A549 (cell line): ENCODE measurements at regions of chr10 and their contacts with region 1.

Region 1: GRCh38 chr10:88386821-88387773 is 196.0 kb downstream of the RNLS start:
- DNase-seq: peak; percentile 33 to 73
- ATAC-seq: peak; percentile 35 to 79; a peak in 5 of 6 replicates
- H3K4me3 ChIP-seq: 0 out of 3 replicates have a peak overlapping the region, but pooled peaks have one; percentile 2
- H3K27ac ChIP-seq: peak overlapping the region; percentile 77 to 82
- H3K4me1 ChIP-seq: peaks cover 29% of the 10 kb centered on the region
- CTCF ChIP-seq: no peak
- EP300 ChIP-seq: no peak
- POLR2A ChIP-seq: no peak
- RAD21 ChIP-seq: no peak

Region 2: GRCh38 chr10:87850742-87851205 is 536.3 kb before region 1 on chr10:
- CTCF ChIA-PET with region 1: interaction called, 39 read pairs
- POLR2A ChIA-PET with region 1: interaction called, 3 read pairs
- DNase-seq: peak; percentile 63 to 83
- ATAC-seq: peak; percentile 89 to 92
- H3K4me3 ChIP-seq: no peak overlapping the region
- H3K27ac ChIP-seq: peak overlapping the region in 1 of 2 experiments; percentile 58; a peak in 3 of 6 replicates
- H3K4me1 ChIP-seq: peaks cover 29% of the 10 kb centered on the region
- CTCF ChIP-seq: peak; percentile 64
- EP300 ChIP-seq: no peak
- POLR2A ChIP-seq: no peak
- RAD21 ChIP-seq: peak; percentile 82 to 87

Region 3: GRCh38 chr10:88114368-88114767 is 272.7 kb before region 1 on chr10:
- CTCF ChIA-PET with region 1: interaction called, 10 read pairs
- POLR2A ChIA-PET with region 1: interaction called, 9 read pairs
- DNase-seq: peak; percentile 62 to 66
- ATAC-seq: peak; percentile 83 to 93
- H3K4me3 ChIP-seq: no peak overlapping the region
- H3K27ac ChIP-seq: no peak overlapping the region
- H3K4me1 ChIP-seq: peaks cover 22% of the 10 kb centered on the region
- CTCF ChIP-seq: peak; percentile 56
- EP300 ChIP-seq: no peak
- POLR2A ChIP-seq: no peak
- RAD21 ChIP-seq: peak; percentile 67 to 71

Region 4: DNA sequence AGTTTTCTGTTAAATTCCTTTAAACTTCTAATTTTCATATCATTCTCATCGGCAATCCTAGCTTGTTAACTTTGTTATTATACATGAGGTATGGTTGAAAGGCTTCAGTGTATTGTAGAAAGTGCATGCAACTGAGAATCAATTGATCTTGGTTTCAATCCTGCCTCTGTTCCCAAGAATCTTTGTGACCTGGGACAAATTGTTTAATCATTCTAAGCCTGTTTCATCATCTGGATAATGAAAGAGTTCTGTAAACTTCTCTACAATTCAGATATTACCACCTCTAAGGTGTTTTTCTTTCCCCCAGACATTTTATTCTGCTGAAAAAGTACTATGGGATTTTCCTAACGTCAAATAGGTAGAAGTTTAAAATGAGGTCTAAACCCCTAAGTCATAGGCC is 17.0 kb after region 1 on chr10:
- CTCF ChIA-PET with region 1: interaction called, 21 read pairs
- POLR2A ChIA-PET with region 1: no interaction called
- DNase-seq: no peak
- ATAC-seq: no peak
- H3K4me3 ChIP-seq: no peak overlapping the region
- H3K27ac ChIP-seq: no peak overlapping the region
- H3K4me1 ChIP-seq: no peaks in the 10 kb centered on the region
- CTCF ChIP-seq: no peak
- EP300 ChIP-seq: no peak
- POLR2A ChIP-seq: no peak
- RAD21 ChIP-seq: no peak

Region 5: DNA sequence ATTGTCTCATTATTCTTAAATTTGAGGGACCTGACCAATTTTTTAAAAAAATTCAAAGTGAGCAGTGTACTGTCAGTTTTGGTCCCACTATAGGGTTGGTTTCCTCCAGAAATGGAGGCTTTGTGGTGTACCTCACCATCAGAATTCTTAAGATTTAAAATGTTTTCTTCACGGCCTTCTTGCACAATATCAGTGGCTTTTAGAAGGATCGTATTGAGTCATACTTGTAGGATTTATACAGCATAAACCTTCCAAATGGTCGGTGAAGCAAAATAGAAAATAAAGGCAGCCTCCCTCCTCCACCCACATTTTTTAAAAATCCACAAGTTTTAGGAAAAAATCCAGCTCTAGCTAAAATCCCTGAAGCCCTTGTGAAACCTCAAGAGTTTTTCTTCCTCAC is 69.6 kb after region 1 on chr10:
- CTCF ChIA-PET with region 1: no interaction called
- POLR2A ChIA-PET with region 1: no interaction called
- DNase-seq: no peak
- ATAC-seq: no peak
- H3K4me3 ChIP-seq: no peak overlapping the region
- H3K27ac ChIP-seq: no peak overlapping the region; a peak in 1 of 6 replicates
- H3K4me1 ChIP-seq: no peaks in the 10 kb centered on the region
- CTCF ChIP-seq: no peak
- EP300 ChIP-seq: no peak
- POLR2A ChIP-seq: no peak
- RAD21 ChIP-seq: no peak

Region 6: GRCh38 chr10:88553116-88553752 is 166.1 kb after region 1 on chr10:
- CTCF ChIA-PET with region 1: interaction called, 10 read pairs
- POLR2A ChIA-PET with region 1: no interaction called
- DNase-seq: peak; percentile 26 to 75
- ATAC-seq: peak; percentile 94 to 97
- H3K4me3 ChIP-seq: no peak overlapping the region
- H3K27ac ChIP-seq: no peak overlapping the region
- H3K4me1 ChIP-seq: peaks cover 10% of the 10 kb centered on the region
- CTCF ChIP-seq: peak; percentile 89
- EP300 ChIP-seq: no peak
- POLR2A ChIP-seq: no peak
- RAD21 ChIP-seq: peak; percentile 89 to 90